Activated CD4-positive, alpha-beta T cell treated with anti-CD3 and anti-CD28 coated beads for 36 hours (primary cell): ENCODE measurements at regions of chr10 and their contacts with region 1.

Region 1: DNA sequence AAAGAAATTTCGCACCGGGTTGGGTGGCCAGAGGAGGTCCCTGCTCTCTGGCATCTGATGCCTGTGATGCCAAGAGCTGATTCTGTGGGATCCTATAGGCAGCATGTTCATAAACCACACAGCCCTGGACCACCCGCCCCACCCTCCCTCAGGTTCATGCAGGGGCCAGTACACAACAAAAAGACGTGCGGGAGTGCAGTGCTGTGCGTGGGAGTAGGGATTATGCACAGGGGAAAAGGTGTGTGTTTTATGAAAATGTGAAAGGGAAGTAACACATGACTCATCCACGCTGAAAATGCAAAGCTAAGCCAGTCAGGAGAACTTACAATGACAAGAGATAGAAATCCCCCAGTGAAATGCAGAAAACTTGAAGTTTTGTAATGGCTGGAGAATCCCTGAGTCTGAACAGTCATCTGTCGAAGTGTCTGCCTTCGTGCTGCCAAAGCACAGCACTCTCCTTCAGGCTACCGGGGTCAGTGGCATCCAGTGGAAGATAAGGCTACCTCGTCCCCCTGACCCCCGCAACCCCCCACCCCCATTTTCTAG is 1.1 kb downstream of the KIAA1217 start:
- DNase-seq: peak; percentile 82
- ATAC-seq: peak; percentile 84
- H3K4me3 Mint-ChIP-seq: peak overlapping the region; percentile 68
- H3K27ac Mint-ChIP-seq: peak overlapping the region; percentile 84
- H3K4me1 Mint-ChIP-seq: peaks cover 31% of the 10 kb centered on the region
- H3K27me3 Mint-ChIP-seq: peaks cover 40% of the 10 kb centered on the region

Region 2: DNA sequence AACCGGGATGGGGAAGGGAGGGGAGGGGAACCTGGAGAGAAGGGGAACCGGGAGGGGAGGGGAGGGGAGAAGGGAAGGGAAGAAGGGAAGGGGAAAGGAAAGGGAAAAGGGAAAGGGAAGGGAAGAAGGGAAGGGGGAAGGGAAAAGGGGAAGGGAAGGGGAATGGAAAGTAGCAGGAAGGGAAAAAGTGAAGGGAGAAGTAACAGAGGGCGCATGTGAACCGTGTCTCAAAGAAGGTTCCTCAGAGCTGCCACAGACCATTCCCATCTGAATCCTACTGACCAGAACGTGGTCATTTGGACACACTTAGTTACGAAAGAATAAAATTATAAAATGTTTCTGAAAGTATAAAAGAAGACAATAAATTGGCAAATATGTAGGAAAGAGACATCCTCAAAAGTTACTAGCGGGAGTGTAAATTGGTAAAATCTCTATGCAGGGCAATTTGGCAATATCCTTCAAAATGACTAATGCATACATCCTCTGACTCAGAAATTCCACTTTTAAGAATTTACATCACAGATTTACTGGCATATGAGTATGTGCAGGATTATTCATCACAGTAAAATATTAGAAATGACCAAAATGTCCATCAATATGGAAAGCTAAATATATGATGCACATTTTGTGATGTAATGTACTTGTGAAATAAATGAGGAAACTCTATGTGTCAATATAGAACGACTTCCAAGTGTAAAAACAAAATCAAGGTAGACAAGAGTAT is 878.3 kb before region 1 on chr10:
- CTCF ChIA-PET with region 1: no interaction called
- POLR2A ChIA-PET with region 1: no interaction called
- intact Hi-C with region 1: loop called in 1 of 2 experiments (anchors 2 kb)
- DNase-seq: no peak
- ATAC-seq: peak; percentile 36
- H3K4me3 Mint-ChIP-seq: no peak overlapping the region
- H3K27ac Mint-ChIP-seq: peak overlapping the region; percentile 48
- H3K4me1 Mint-ChIP-seq: peaks cover 39% of the 10 kb centered on the region
- H3K27me3 Mint-ChIP-seq: no peaks in the 10 kb centered on the region

Region 3: GRCh38 chr10:23448802-23449570 is 761.0 kb before region 1 on chr10:
- CTCF ChIA-PET with region 1: no interaction called
- POLR2A ChIA-PET with region 1: no interaction called
- intact Hi-C with region 1: loop called in 1 of 2 experiments (anchors 5 kb)
- DNase-seq: no peak
- ATAC-seq: peak; percentile 83
- H3K4me3 Mint-ChIP-seq: no peak overlapping the region
- H3K27ac Mint-ChIP-seq: peak overlapping the region; percentile 87
- H3K4me1 Mint-ChIP-seq: peaks cover 31% of the 10 kb centered on the region
- H3K27me3 Mint-ChIP-seq: no peaks in the 10 kb centered on the region

Region 4: DNA sequence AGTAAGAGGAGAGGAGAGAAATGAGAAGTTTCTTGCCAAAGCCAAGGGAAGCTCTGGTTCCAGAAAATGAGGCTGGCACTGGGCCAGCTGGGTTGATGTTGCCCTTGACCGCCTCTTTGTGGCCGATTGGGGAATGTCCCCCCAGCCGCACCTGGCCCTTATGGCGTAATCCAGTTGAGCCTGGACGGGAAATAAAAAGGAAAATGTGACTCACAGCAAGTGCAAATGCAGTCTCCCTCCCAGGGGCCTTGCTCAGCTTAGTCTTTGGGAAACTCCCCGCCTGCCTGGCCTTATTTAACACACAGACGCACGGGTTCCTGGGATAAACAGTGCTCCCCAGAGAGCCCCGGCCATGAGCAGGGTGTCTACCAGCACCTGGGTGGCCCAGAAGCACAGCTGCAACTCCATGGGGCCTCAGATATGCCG is 173.7 kb after region 1 on chr10:
- CTCF ChIA-PET with region 1: no interaction called
- POLR2A ChIA-PET with region 1: no interaction called
- intact Hi-C with region 1: loop called (anchors 1 kb)
- DNase-seq: peak; percentile 76
- ATAC-seq: peak; percentile 75
- H3K4me3 Mint-ChIP-seq: peak overlapping the region; percentile 10
- H3K27ac Mint-ChIP-seq: peak overlapping the region; percentile 65
- H3K4me1 Mint-ChIP-seq: peaks cover 18% of the 10 kb centered on the region
- H3K27me3 Mint-ChIP-seq: peaks cover 25% of the 10 kb centered on the region

Region 5: DNA sequence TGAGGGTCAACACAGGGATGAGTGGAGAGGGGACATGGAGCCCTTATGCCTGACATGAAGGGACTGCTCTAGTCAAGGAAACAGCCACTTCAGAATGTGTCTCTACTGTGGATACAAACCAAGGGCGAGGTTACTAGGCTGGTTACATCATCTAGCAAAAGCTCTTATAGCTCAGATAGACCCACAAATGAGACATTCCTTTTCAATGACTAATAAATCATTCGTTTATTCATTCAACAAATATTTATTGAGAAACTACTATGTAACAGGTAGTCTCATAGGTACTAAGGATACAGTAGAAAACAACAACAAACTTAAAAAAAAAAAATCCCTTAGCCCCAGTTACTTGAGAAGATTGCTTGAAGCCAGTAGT is 218.4 kb after region 1 on chr10:
- CTCF ChIA-PET with region 1: no interaction called
- POLR2A ChIA-PET with region 1: no interaction called
- intact Hi-C with region 1: no loop called
- DNase-seq: no peak
- ATAC-seq: no peak
- H3K4me3 Mint-ChIP-seq: no peak overlapping the region
- H3K27ac Mint-ChIP-seq: no peak overlapping the region
- H3K4me1 Mint-ChIP-seq: no peaks in the 10 kb centered on the region
- H3K27me3 Mint-ChIP-seq: peaks cover 2% of the 10 kb centered on the region

Region 6: GRCh38 chr10:24706479-24707118 is 496.6 kb after region 1 on chr10:
- CTCF ChIA-PET with region 1: no interaction called
- POLR2A ChIA-PET with region 1: no interaction called
- intact Hi-C with region 1: loop called in 1 of 2 experiments (anchors 2 kb)
- DNase-seq: peak; percentile 62
- ATAC-seq: peak; percentile 88
- H3K4me3 Mint-ChIP-seq: no peak overlapping the region
- H3K27ac Mint-ChIP-seq: no peak overlapping the region
- H3K4me1 Mint-ChIP-seq: peaks cover 7% of the 10 kb centered on the region
- H3K27me3 Mint-ChIP-seq: no peaks in the 10 kb centered on the region